Posterior vena cava (tissue), 2 donors: ENCODE measurements at regions of chr12 and their contacts with region 1.

Region 1: GRCh38 chr12:110475426-110475825 is 6.8 kb downstream of the FAM216A start:
- DNase-seq: no peak

Region 2: GRCh38 chr12:110844551-110845395 is 369.3 kb after region 1 on chr12:
- intact Hi-C with region 1: loop called in 1 of 2 experiments (anchors 5 kb)
- DNase-seq: no peak